ENCODE measurements at regions of chr1 and their contacts with region 1.

Region 1: DNA sequence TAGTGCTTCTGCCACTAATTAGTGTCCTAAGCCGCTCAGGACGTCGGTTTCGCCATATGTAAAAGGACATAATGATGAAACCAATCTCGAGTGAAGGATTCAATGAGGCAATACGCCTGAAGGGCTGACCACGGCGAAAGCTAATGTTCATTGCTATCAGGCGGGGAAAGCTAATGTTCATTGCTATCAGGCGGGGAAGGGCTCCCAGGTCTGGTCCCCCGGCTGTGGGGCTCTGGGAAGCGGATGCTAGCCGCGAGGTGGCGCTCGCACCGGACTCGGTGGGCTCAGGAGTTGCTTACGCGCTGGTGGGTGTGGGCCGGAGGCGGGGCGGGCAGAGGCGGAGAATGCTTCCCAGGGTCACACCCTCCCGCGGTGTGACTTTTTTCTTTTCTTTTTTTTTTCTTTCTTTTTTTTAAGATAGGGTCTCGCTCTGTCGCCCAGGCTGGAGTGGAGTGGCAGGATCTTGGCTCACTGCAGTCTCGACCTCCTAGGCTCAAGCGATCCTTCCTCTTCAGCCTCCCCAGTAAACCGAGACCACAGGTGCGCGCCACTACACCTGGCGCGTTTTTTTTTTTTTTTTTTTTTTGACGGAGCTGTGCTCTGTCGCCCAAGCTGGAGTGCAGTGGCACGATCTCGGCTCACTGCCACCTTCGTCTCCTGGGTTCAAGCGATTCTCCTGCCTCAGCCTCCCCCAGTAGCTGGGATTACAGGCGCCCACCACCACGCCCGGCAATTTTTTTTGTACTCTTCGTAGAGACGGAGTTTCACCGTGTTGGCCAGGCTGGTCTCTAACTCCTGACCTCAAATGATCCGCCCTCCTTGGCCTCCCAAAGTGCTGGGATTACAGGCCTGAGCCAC is 1.1 kb upstream of the PEAR1 start:
- DNase-seq: peak; percentile 87
- H3K4me3 ChIP-seq: no peak overlapping the region
- H3K27ac ChIP-seq: peak overlapping the region; percentile 64
- H3K4me1 ChIP-seq: peaks cover 31% of the 10 kb centered on the region
- H3K27me3 ChIP-seq: no peaks in the 10 kb centered on the region
- CTCF ChIP-seq: peak; percentile 91 to 97
- POLR2A ChIP-seq: no peak

Region 2: DNA sequence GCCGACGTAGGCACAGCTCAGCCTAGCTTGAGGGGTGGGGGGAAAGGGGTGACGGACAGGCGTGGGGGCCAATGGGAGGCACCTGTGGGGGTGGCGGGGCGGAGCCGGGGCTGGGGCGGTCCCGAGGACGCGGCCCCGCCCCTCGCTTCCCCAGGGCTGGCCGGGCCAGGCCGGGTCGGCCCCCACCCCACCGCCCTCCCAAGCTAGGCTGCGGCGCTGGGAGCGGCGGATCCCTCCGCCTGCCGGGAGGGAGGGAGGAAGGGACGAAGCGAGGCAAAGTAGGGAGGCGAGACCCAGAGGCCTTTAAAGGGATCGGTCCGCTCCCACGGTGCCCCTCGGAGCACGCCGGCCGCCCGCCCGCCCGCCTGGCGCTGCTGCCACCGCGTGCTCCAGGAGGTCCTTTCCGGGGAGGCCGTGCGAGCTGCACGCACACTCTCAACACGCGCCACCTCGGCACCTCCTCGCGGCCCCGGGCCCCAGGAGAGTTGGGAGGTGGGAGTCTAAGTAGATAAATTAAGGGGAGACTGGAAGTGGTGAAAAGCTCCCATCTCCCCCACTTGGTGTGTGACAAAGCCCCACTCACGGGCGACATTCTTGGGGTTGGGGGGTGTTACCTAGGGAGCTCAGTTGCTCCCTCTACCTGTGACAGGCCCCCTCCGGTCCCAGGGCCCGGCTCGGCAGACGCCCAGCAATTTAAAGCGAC is 391.5 kb before region 1 on chr1:
- CTCF ChIA-PET with region 1: no interaction called
- POLR2A ChIA-PET with region 1: no interaction called
- dilution Hi-C with region 1: no loop called
- intact Hi-C with region 1: loop called (anchors 10 kb)
- DNase-seq: peak; percentile 94
- H3K4me3 ChIP-seq: peak overlapping the region; percentile 76 to 95 (median 88)
- H3K27ac ChIP-seq: peak overlapping the region; percentile 100
- H3K4me1 ChIP-seq: peaks cover 63% of the 10 kb centered on the region
- H3K27me3 ChIP-seq: no peaks in the 10 kb centered on the region
- CTCF ChIP-seq: peak; percentile 48 to 49
- POLR2A ChIP-seq: peak; percentile 70

Region 3: GRCh38 chr1:156659994-156660751 is 232.2 kb before region 1 on chr1:
- CTCF ChIA-PET with region 1: interaction called, 3 read pairs
- POLR2A ChIA-PET with region 1: no interaction called
- dilution Hi-C with region 1: no loop called
- intact Hi-C with region 1: loop called (anchors 2 kb)
- DNase-seq: peak; percentile 96
- H3K4me3 ChIP-seq: peak overlapping the region in 1 of 3 experiments; percentile 59
- H3K27ac ChIP-seq: peak overlapping the region; percentile 85
- H3K4me1 ChIP-seq: peaks cover 67% of the 10 kb centered on the region
- H3K27me3 ChIP-seq: peaks cover 3 to 9% of the 10 kb centered on the region in 2 experiments
- CTCF ChIP-seq: peak; percentile 100
- POLR2A ChIP-seq: peak; percentile 83

Region 4: DNA sequence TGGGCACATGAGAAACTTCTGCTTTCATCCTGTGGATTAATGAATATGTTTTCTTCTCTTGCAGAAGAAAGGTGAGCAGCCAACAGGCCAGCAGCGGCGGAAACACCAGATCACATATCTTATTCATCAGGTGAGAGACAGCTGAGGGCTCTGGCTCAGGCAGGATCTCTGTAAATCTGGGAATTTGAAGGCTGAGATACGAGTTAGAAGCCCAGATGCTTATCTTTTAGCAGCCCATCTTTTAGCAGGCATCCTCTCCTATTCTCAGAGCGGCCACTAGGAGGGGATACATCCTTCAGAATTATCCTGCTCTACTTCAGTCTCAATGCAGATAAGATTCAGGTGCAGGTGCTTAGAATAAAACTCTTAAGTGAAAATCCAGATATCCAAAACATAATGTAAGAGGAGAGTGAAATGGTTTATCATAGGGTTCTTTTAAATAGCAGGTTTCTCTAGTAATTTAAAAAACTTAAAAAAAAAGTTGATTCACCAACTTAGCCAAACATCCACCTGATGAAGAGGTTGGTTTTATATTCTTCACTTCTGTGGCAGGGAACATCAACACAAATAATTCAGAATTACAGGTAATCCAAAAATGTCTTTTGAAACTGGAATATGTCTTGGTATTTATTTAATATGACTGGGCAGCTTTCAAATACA is 95.1 kb before region 1 on chr1:
- CTCF ChIA-PET with region 1: interaction called, 25 read pairs
- POLR2A ChIA-PET with region 1: no interaction called
- dilution Hi-C with region 1: no loop called
- intact Hi-C with region 1: loop called (anchors 1 kb)
- DNase-seq: peak; percentile 75
- H3K4me3 ChIP-seq: no peak overlapping the region
- H3K27ac ChIP-seq: no peak overlapping the region
- H3K4me1 ChIP-seq: no peaks in the 10 kb centered on the region
- H3K27me3 ChIP-seq: no peaks in the 10 kb centered on the region
- CTCF ChIP-seq: peak; percentile 61 to 72
- POLR2A ChIP-seq: no peak

Region 5: GRCh38 chr1:156876281-156876680 is 16.1 kb before region 1 on chr1:
- CTCF ChIA-PET with region 1: interaction called, 13 read pairs
- POLR2A ChIA-PET with region 1: no interaction called
- dilution Hi-C with region 1: no loop called
- intact Hi-C with region 1: no loop called
- DNase-seq: no peak
- H3K4me3 ChIP-seq: no peak overlapping the region
- H3K27ac ChIP-seq: no peak overlapping the region
- H3K4me1 ChIP-seq: peaks cover 17% of the 10 kb centered on the region
- H3K27me3 ChIP-seq: peaks cover 6 to 15% of the 10 kb centered on the region in 2 experiments
- CTCF ChIP-seq: peak in 1 of 2 donors; percentile 24
- POLR2A ChIP-seq: no peak

Region 6: DNA sequence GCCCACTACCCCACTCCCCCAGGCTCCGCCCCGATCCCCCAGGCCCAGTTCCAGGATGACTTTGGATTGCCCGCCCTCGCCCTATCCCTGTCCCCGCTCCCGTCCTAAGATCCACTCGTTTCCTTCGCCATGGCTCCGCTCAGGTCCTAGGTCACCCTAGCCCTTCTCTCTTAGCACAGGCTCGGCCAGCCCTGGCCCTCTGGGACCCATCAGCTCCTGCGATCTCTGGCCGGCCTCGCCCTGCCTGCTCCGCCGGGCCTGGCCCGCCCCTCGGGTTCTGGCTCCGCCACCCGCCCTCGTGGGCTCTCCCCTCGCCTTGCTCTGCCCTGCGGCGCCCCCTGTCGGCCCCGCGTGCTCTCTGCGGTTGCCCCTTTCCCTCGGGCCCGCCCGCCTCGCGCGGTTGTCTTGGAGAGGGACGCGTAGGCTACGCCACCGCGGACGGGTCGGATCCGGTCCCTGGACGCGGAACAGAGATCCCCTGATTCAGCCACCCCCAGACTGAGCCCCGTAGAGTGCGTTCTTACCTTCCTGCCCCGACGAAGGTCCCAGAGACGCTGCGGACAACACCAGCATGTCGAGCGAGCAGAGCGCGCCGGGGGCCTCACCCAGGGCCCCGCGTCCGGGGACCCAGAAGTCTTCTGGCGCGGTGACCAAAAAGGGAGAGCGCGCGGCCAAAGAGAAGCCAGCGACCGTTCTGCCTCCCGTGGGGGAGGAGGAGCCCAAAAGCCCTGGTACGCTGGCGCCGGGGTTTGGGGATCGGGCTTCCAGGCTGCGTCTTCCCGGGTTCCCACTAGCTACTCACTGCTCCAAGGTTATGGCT is 28.0 kb after region 1 on chr1 and contains the start of gene LRRC71:
- CTCF ChIA-PET with region 1: interaction called, 312 read pairs
- POLR2A ChIA-PET with region 1: no interaction called
- dilution Hi-C with region 1: no loop called
- intact Hi-C with region 1: loop called (anchors 1 kb)
- DNase-seq: peak; percentile 77
- H3K4me3 ChIP-seq: no peak within 1 kb of the TSS
- H3K27ac ChIP-seq: no peak within 1 kb of the TSS
- H3K4me1 ChIP-seq: no peaks in the 10 kb centered on the region
- H3K27me3 ChIP-seq: peaks cover 26 to 32% of the 10 kb centered on the region in 2 experiments
- CTCF ChIP-seq: peak; percentile 97 to 98
- POLR2A ChIP-seq: peak; percentile 71
- total RNA-seq, gene LRRC71: 0.66 and 1.2 TPM in 2 replicates

Region 7: DNA sequence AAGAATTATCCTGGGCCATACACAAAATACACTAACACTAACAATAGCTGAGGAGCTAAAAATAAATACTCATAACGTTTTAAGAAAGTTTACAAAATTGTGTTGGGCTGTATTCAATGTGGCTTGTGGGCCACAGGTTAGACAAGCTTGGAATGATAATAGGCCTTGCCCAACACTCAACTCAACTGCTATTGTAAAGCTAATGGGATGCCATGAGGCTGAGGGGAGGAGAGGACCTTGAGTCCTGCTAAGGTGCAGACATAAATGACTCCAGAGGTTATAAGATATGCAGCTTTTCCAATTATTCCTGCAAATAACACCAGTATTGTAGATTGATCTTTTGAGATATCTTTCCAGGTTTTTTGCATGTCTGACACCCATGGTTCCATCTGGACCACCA is 562.9 kb after region 1 on chr1:
- CTCF ChIA-PET with region 1: no interaction called
- POLR2A ChIA-PET with region 1: no interaction called
- dilution Hi-C with region 1: no loop called
- intact Hi-C with region 1: no loop called
- DNase-seq: no peak
- H3K4me3 ChIP-seq: no peak overlapping the region
- H3K27ac ChIP-seq: no peak overlapping the region
- H3K4me1 ChIP-seq: no peaks in the 10 kb centered on the region
- H3K27me3 ChIP-seq: peaks cover 0 to 4% of the 10 kb centered on the region in 2 experiments
- CTCF ChIP-seq: no peak
- POLR2A ChIP-seq: no peak

Measured in endothelial cell of umbilical vein (primary cell).